Esophagus muscularis mucosa (tissue), 4 donors: ENCODE measurements at regions of chr6 and their contacts with region 1.

Region 1: GRCh38 chr6:5003604-5004372 is at the start of gene RPP40:
- DNase-seq: peak; percentile 99
- H3K4me3 ChIP-seq: peak within 1 kb of the TSS; percentile 66 to 77 (median 70)
- H3K27ac ChIP-seq: peak within 1 kb of the TSS; percentile 88 to 93 (median 92)
- H3K4me1 ChIP-seq: peaks cover 7 to 10% (median 8%) of the 10 kb centered on the region in 4 donors
- H3K27me3 ChIP-seq: no peaks in the 10 kb centered on the region
- CTCF ChIP-seq: peak; percentile 69 to 97 (median 81)
- EP300 ChIP-seq: no peak
- POLR2A ChIP-seq: no peak
- total RNA-seq, gene RPP40: 2.5 to 7.9 (median 3.8) TPM

Region 2: GRCh38 chr6:5025911-5026819 is 22.4 kb after region 1 on chr6:
- intact Hi-C with region 1: loop called (anchors 2 kb)
- DNase-seq: peak; percentile 91
- H3K4me3 ChIP-seq: peak overlapping the region; percentile 61 to 66 (median 64)
- H3K27ac ChIP-seq: peak overlapping the region; percentile 87 to 92 (median 88)
- H3K4me1 ChIP-seq: peaks cover 8 to 34% (median 16%) of the 10 kb centered on the region in 4 donors
- H3K27me3 ChIP-seq: no peaks in the 10 kb centered on the region
- CTCF ChIP-seq: peak; percentile 9 to 27 (median 20)
- EP300 ChIP-seq: no peak
- POLR2A ChIP-seq: no peak

Region 3: GRCh38 chr6:5085193-5085647 is 81.4 kb after region 1 on chr6 and contains the start of gene PPP1R3G:
- intact Hi-C with region 1: no loop called
- DNase-seq: no peak
- H3K4me3 ChIP-seq: peak within 1 kb of the TSS; percentile 59 to 82 (median 72)
- H3K27ac ChIP-seq: peak within 1 kb of the TSS; percentile 81 to 89 (median 88)
- H3K4me1 ChIP-seq: peaks cover 18 to 37% (median 25%) of the 10 kb centered on the region in 4 donors
- H3K27me3 ChIP-seq: no peaks in the 10 kb centered on the region
- CTCF ChIP-seq: no peak
- EP300 ChIP-seq: no peak
- POLR2A ChIP-seq: no peak
- total RNA-seq, gene PPP1R3G: 3.0 to 7.9 (median 5.5) TPM

Region 4: DNA sequence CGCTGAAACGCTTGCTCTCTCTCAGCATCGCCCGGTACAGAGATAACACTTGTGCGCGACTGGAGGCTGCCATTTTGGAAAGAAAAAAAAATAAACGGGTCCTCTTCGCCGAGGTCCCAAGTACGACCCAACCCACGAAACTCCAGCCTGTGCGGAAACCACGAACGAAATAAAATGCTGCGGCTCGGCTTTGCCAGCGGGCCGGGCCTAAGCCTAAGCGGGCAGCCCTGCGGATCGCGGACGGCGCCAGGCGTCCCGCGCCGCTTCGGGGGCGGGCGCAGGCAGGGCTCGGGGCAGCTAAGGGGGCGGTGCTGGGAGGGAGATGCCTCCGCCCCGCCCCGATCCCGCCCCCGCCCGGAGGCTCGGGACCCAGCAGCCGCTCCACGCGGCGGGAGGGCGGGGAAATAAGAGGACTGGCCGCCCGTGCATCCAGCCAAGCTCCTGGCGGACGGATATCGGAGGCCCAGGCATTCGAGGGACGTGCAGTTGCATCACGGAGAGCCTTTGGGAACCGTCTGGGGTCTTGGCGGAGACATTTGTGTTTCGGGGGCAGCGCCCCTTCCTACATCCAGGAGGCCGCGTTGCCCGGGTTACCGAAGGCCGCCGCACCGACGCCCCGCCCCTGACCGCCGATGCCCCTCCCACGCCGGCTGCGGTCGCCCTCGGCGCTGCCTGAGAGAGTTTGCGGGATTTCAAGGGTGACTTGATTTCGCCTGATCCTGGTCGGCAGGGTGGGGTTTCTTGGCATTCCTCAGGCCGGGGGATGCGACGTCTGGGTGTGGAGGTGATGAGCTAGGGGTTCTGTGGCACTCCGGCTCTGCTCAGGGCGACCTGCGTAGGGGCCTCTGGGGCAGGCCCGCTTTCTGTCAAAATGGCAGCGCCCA is 257.1 kb after region 1 on chr6 and contains the starts of genes FARS2 and LYRM4:
- intact Hi-C with region 1: loop called (anchors 10 kb)
- DNase-seq: peak; percentile 97
- H3K4me3 ChIP-seq: peak within 1 kb of the TSS; percentile 72 to 82 (median 75)
- H3K27ac ChIP-seq: peak within 1 kb of the TSS; percentile 89 to 94 (median 92)
- H3K4me1 ChIP-seq: peaks cover 17 to 26% (median 24%) of the 10 kb centered on the region in 4 donors
- H3K27me3 ChIP-seq: no peaks in the 10 kb centered on the region
- CTCF ChIP-seq: peak in 1 of 3 experiments; percentile 49
- EP300 ChIP-seq: no peak
- POLR2A ChIP-seq: no peak
- total RNA-seq, gene FARS2: 10.6 to 24.9 (median 15.2) TPM
- total RNA-seq, gene LYRM4: 16.9 to 20.9 (median 18.4) TPM

Region 5: DNA sequence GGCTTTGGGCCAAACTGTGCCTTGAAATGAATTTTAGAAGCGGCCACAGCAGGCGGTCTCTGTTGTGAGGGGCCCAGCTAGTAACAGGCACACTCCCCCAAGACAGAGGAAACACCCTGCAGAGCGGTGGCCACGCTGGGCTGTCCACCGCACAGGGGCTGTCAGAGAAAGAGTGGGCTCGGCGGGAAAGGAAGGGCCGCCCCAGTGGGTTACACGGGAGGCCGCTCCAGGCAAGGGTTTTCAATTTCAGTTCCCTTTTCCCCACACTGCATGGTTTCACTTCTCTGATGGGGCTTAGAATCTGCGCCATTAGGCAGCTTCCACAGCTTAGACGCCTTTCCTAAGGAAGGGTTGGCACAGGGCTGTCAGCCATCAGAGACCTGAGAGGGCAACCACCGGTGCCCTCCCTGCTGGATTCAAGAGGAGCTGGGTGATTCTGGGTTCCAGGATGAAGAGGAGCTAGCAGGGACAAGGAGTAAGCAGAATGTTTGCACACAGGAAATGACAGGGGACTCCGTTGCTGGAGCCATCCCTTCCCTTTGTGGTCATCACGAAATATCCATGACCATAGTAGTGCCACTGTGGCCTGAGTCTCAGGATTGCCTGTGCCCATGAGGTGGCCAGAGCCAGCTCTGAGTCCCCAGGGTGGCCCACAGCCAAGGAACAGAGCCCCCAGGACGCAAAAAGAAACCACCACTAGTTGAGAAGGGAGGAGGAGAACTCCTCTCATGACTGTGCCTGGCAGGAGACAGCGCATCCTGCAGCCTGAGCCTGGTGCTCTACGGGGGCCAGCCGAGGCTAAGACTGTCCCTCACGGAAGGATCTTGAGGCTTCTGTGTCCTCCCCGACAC is 720.3 kb after region 1 on chr6:
- intact Hi-C with region 1: no loop called
- DNase-seq: no peak
- H3K4me3 ChIP-seq: no peak overlapping the region
- H3K27ac ChIP-seq: peak overlapping the region in 2 of 4 donors; percentile 0 to 18
- H3K4me1 ChIP-seq: peaks cover 0 to 4% (median under 1%) of the 10 kb centered on the region in 4 donors
- H3K27me3 ChIP-seq: no peaks in the 10 kb centered on the region
- CTCF ChIP-seq: no peak
- EP300 ChIP-seq: no peak
- POLR2A ChIP-seq: no peak